Caco-2 (cell line): ENCODE measurements at regions of chr3 and their contacts with region 1.

Region 1: GRCh38 chr3:131543714-131544113 is 40.9 kb upstream of the MRPL3 start:
- DNase-seq: no peak
- H3K4me3 ChIP-seq: no peak overlapping the region
- H3K4me3 Mint-ChIP-seq: no peak overlapping the region
- H3K27ac Mint-ChIP-seq: no peak overlapping the region
- H3K4me1 ChIP-seq: no peaks in the 10 kb centered on the region
- H3K4me1 Mint-ChIP-seq: no peaks in the 10 kb centered on the region
- H3K27me3 ChIP-seq: no peaks in the 10 kb centered on the region; the same call in 1 of the 2 replicates
- H3K27me3 Mint-ChIP-seq: peaks cover 6% of the 10 kb centered on the region
- CTCF ChIP-seq: no peak

Region 2: DNA sequence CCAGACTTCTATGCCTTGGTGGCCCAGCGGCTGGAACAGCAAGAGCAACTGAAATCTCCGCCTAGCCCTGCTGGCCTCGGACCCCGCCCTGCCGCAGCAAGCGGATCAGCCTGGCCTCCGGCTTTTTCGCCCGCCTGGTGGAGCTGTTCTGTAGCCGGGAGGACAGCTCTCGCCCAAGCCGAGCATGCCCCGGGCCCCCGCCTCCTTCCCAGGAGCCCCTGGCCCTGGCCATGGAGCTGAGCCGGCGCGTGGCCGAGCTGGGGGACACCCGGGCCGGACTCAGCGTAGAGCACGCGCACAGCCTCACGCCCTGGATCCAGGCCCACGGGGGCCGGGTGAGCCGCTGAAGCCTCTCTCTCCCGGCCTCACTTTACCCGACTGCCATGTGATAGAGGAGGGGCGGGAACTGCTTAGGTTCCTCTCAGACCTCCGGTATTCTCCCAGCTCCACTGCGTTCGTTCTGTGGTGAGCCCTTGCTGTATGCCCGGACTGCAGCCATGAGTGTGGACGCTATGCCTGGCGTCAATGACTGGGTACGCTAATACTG is 16.8 kb before region 1 on chr3:
- CTCF ChIA-PET with region 1: no interaction called
- POLR2A ChIA-PET with region 1: no interaction called
- intact Hi-C with region 1: no loop called
- DNase-seq: no peak
- H3K4me3 ChIP-seq: no peak overlapping the region
- H3K4me3 Mint-ChIP-seq: no peak overlapping the region
- H3K27ac Mint-ChIP-seq: no peak overlapping the region
- H3K4me1 ChIP-seq: no peaks in the 10 kb centered on the region
- H3K4me1 Mint-ChIP-seq: no peaks in the 10 kb centered on the region
- H3K27me3 ChIP-seq: no peaks in the 10 kb centered on the region
- H3K27me3 Mint-ChIP-seq: peaks cover 6% of the 10 kb centered on the region
- CTCF ChIP-seq: no peak

Region 3: GRCh38 chr3:131658108-131658507 is 114.4 kb after region 1 on chr3:
- CTCF ChIA-PET with region 1: no interaction called
- POLR2A ChIA-PET with region 1: no interaction called
- intact Hi-C with region 1: loop called (anchors 1 kb)
- DNase-seq: peak; percentile 21 to 39
- H3K4me3 ChIP-seq: no peak overlapping the region
- H3K4me3 Mint-ChIP-seq: no peak overlapping the region
- H3K27ac Mint-ChIP-seq: no peak overlapping the region
- H3K4me1 ChIP-seq: no peaks in the 10 kb centered on the region
- H3K4me1 Mint-ChIP-seq: no peaks in the 10 kb centered on the region
- H3K27me3 ChIP-seq: no peaks in the 10 kb centered on the region
- H3K27me3 Mint-ChIP-seq: peaks cover 13% of the 10 kb centered on the region
- CTCF ChIP-seq: peak in 1 of 2 experiments; percentile 51